Esophagus muscularis mucosa (tissue), 4 donors: ENCODE measurements at regions of chr12 and their contacts with region 1.

Region 1: DNA sequence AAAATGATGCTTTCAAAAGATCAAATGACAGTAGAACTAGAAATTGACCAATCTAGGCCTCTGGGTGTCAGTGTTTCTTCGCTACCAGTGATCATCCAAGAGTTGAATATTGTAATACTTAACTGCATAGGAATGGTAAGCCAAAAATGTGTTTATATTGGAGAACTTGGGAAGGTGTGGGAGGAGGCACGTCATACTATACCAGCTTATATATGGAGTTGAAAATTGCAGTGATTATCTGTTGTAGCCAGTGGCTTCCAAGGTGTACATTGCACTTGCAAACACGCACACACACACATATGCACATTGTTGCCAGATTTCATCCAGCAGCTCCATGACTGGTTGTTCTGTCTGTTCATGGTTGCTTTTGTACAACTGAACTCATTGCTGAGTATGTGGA is 36.1 kb downstream of the EID3 start:
- DNase-seq: no peak
- H3K4me3 ChIP-seq: no peak overlapping the region
- H3K27ac ChIP-seq: peak overlapping the region in 3 of 4 donors; percentile 17 to 53 (median 50)
- H3K4me1 ChIP-seq: peaks cover 23 to 45% (median 37%) of the 10 kb centered on the region in 4 donors
- H3K27me3 ChIP-seq: no peaks in the 10 kb centered on the region
- CTCF ChIP-seq: no peak
- EP300 ChIP-seq: no peak
- POLR2A ChIP-seq: no peak

Region 2: GRCh38 chr12:104427011-104427461 is 87.4 kb after region 1 on chr12:
- intact Hi-C with region 1: no loop called
- DNase-seq: no peak
- H3K4me3 ChIP-seq: no peak overlapping the region
- H3K27ac ChIP-seq: no peak overlapping the region
- H3K4me1 ChIP-seq: no peaks in the 10 kb centered on the region
- H3K27me3 ChIP-seq: no peaks in the 10 kb centered on the region
- CTCF ChIP-seq: no peak
- EP300 ChIP-seq: no peak
- POLR2A ChIP-seq: no peak

Region 3: DNA sequence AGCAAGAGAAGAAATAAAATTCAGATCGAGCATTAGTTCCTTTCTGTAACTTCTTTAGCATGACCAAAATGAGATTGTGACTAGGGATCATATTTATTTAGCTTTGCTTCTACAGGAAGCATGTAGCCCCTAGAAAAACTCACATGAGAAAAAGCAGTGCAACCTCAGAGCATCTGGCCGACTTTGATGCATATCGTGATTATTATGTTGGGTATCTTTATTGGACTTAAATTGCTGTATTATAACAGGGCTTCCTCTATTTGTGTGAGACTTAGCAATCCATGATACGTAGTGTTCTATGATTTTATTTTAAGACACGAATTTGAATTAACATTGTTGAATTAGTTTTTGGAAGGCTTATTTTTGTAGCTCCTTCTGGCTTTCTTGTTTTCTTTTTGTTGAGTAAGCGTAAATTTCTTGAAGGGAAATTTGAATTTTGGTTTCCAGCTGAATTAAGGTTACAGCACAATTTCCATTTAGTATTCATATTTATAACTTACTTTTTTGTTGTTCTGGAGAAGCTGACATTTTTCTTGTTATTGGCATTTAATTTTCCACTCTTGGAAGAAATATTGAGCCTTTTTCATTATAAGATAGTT is 801.8 kb after region 1 on chr12:
- intact Hi-C with region 1: loop called (anchors 10 kb)
- DNase-seq: no peak
- H3K4me3 ChIP-seq: no peak overlapping the region
- H3K27ac ChIP-seq: no peak overlapping the region
- H3K4me1 ChIP-seq: peaks cover 0 to 17% (median 3%) of the 10 kb centered on the region in 4 donors
- H3K27me3 ChIP-seq: no peaks in the 10 kb centered on the region
- CTCF ChIP-seq: no peak
- EP300 ChIP-seq: no peak
- POLR2A ChIP-seq: no peak